GM12878 (cell line): ENCODE measurements at regions of chr1 and their contacts with region 1.

Region 1: DNA sequence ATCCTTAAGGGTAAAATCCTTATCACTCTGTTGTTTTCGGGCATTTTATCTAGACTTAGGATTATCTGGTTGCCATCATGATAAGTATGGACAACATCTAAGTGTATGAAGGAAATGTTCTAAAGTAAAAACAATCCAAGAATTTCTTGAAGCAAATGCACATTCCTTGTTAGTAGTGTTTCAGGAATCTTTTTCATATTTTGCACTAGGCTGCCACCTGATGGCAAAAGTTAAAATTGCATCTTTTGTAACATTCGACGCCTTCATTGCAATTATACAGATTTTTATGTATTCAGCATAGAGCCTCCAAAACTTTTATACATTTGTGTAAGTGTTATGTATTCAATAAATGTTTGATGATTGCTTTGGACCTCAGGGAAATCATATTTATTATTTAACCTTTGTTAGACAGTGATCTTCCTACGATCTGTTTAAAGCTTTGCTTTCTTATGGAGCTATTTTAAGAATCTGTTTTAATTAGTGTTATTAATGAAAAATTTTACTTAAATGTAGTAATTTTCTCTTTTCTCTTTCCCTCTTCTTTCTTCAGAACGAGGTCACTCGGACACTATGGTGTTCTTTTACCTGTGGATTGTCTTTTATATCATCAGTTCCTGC is 49.4 kb upstream of the KIAA1614 start:
- DNase-seq: no peak
- ATAC-seq: no peak
- H3K4me3 ChIP-seq: no peak overlapping the region
- H3K27ac ChIP-seq: no peak overlapping the region
- H3K4me1 ChIP-seq: no peaks in the 10 kb centered on the region
- H3K27me3 ChIP-seq: no peaks in the 10 kb centered on the region
- CTCF ChIP-seq: peak; percentile 51 to 69 (median 59); a peak in 5 of 6 replicates
- EP300 ChIP-seq: no peak
- POLR2A ChIP-seq: no peak
- RAD21 ChIP-seq: peak; percentile 88

Region 2: DNA sequence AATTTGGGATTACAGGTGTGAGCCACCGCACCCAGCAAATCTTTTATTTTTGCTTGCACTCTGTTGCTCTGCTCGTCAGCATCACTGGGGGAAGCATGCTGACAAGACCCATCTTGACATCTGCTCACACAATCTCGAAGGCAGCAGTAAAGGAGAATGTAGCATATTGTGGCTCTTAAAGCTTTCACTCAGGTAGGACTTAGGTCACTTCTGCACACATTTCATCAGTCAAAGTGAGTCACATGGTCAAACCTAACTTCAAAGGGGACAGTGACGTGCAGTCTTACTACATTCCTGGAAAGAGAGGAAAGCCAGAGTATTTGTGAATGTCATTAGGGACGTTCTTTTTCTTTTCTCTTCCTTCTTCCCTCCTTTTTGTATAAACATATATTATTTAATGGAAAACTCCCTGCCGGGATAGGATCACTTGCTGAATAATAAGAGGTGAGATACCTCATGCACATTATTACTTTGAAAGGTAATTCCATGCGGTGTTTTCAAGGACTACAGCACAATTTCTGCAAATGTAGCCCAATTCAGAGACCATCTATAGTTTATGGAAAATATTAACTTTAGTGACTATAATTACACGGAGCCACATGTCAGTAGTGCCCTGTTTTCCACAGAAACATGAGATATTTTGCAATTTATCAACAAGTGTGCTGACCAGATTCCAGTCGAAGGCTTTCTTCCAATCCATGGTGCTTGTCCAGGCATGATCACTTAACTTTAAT is 341.6 kb before region 1 on chr1:
- CTCF ChIA-PET with region 1: interaction called, 373 read pairs
- POLR2A ChIA-PET with region 1: interaction called, 3 read pairs
- RAD21 ChIA-PET with region 1: interaction called, 110 read pairs
- SMC1A ChIA-PET with region 1: interaction called, 139 read pairs
- in situ Hi-C with region 1: no loop called
- intact Hi-C with region 1: loop called (anchors 5 kb)
- DNase-seq: no peak
- ATAC-seq: no peak
- H3K4me3 ChIP-seq: no peak overlapping the region
- H3K27ac ChIP-seq: no peak overlapping the region
- H3K4me1 ChIP-seq: no peaks in the 10 kb centered on the region
- H3K27me3 ChIP-seq: no peaks in the 10 kb centered on the region
- CTCF ChIP-seq: no peak
- EP300 ChIP-seq: no peak
- POLR2A ChIP-seq: no peak
- RAD21 ChIP-seq: no peak

Region 3: DNA sequence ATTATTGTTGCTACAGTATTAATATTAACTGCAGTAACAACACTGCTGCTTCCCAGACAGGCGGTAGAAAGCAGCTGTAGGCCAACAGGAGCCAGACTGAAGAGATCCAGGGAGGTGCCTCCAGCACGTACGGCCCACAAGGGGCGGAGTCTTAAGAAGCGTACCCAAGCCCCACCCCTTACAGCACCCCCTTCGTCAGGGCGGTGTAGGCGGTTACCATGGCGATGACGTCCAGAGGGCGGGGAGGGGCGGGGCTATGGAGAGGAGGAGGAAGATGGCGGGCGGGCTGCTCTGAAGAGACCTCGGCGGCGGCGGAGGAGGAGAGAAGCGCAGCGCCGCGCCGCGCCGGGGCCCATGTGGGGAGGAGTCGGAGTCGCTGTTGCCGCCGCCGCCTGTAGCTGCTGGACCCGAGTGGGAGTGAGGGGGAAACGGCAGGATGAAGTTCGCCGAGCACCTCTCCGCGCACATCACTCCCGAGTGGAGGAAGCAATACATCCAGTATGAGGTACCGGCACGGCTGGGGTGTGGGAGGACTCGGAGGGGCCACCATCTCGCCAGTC is 231.4 kb before region 1 on chr1 and contains the start of gene XPR1:
- CTCF ChIA-PET with region 1: interaction called, 110 read pairs
- POLR2A ChIA-PET with region 1: interaction called, 4 read pairs
- RAD21 ChIA-PET with region 1: interaction called, 24 read pairs
- SMC1A ChIA-PET with region 1: interaction called, 54 read pairs
- in situ Hi-C with region 1: no loop called
- intact Hi-C with region 1: loop called (anchors 5 kb)
- DNase-seq: peak; percentile 95
- ATAC-seq: peak; percentile 96
- H3K4me3 ChIP-seq: peak within 1 kb of the TSS; percentile 89
- H3K27ac ChIP-seq: peak within 1 kb of the TSS; percentile 56
- H3K4me1 ChIP-seq: peaks cover 8% of the 10 kb centered on the region
- H3K27me3 ChIP-seq: no peaks in the 10 kb centered on the region
- CTCF ChIP-seq: peak; percentile 9 to 16 (median 10); a peak in 1 of 6 replicates
- EP300 ChIP-seq: no peak
- POLR2A ChIP-seq: peak; percentile 88
- RAD21 ChIP-seq: peak; percentile 26; the same call in 1 of the 2 replicates
- polyA plus RNA-seq, gene XPR1: 1.1 to 1.5 TPM

Region 4: DNA sequence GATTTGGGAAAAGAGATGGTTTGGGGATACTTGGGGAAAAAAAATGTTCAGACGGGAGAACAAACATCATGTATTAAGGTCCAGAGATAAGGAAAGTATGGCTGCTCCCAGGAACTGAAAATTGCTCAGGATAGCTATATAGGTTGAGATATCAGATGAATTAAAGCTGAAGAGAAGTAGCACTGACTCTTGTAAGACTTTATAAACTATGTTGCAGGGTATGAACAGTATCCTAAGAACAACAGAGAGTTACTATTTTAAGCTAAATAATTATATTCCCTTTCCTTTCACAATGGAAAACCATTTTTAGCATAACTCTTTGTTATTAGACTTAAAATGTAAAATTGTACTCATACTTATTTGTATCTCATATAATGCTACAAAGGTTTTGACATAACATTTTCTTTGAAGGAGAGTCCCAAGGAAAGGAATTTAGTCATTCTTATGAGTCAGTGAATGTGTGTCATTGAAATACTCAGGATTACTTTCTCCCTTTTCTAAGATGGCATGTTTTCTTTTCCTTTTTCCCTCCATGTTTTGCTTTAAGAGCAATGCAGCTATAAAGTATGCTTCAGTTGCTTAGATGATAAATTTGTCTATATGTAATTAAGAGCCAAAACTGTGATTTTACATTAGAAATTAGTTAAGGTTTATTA is 89.9 kb before region 1 on chr1:
- CTCF ChIA-PET with region 1: interaction called, 36 read pairs
- POLR2A ChIA-PET with region 1: no interaction called
- RAD21 ChIA-PET with region 1: interaction called, 14 read pairs
- SMC1A ChIA-PET with region 1: interaction called, 20 read pairs
- in situ Hi-C with region 1: no loop called
- intact Hi-C with region 1: loop called (anchors 5 kb)
- DNase-seq: no peak
- ATAC-seq: no peak
- H3K4me3 ChIP-seq: no peak overlapping the region
- H3K27ac ChIP-seq: no peak overlapping the region
- H3K4me1 ChIP-seq: no peaks in the 10 kb centered on the region; the same call in 1 of the 2 replicates
- H3K27me3 ChIP-seq: no peaks in the 10 kb centered on the region
- CTCF ChIP-seq: no peak
- EP300 ChIP-seq: no peak
- POLR2A ChIP-seq: no peak
- RAD21 ChIP-seq: no peak

Region 5: DNA sequence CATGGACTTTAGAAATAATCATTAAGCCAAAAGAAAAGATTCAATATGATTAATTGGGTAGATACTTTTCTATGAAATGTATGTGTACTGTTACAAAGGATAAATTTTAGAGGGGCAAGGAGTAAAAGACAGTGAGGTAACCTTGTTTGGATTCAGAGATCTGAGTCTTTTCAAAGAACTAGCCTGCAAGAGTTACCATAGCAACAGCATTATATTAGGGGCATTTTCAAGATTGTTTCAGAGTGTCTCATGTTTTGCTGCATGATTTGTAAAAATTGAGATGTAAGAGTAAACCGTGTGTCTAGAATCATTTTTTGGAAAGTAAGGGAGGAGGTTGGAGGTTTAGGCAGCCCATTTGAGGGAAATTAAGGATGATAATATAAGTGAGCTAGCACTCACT is 21.2 kb before region 1 on chr1:
- CTCF ChIA-PET with region 1: interaction called, 11 read pairs
- POLR2A ChIA-PET with region 1: no interaction called
- RAD21 ChIA-PET with region 1: interaction called, 10 read pairs
- SMC1A ChIA-PET with region 1: interaction called, 11 read pairs
- in situ Hi-C with region 1: no loop called
- intact Hi-C with region 1: no loop called
- DNase-seq: no peak
- ATAC-seq: no peak
- H3K4me3 ChIP-seq: no peak overlapping the region
- H3K27ac ChIP-seq: no peak overlapping the region
- H3K4me1 ChIP-seq: no peaks in the 10 kb centered on the region
- H3K27me3 ChIP-seq: no peaks in the 10 kb centered on the region
- CTCF ChIP-seq: no peak
- EP300 ChIP-seq: no peak
- POLR2A ChIP-seq: no peak
- RAD21 ChIP-seq: no peak

Region 6: DNA sequence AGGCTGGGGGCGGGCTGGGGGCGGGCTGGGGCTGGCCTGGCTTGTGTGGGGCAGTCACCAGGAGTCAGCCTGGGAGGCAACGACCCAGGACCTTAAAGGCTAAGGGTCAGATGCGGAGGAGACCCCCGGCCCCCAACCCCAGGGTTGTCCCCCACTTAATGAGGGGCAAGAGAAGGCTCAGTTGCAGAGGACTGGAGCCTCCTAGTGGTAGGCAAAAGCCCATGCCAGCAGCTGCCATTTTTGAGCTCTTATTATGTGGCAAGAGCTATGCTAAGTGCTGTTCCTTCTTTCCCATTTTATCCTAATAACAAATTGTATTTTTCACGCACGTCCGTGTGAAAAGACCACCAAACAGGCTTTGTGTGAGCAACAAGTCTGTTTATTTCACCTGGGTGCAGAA is 57.4 kb after region 1 on chr1:
- CTCF ChIA-PET with region 1: interaction called, 11 read pairs
- POLR2A ChIA-PET with region 1: no interaction called
- RAD21 ChIA-PET with region 1: interaction called, 11 read pairs
- SMC1A ChIA-PET with region 1: interaction called, 5 read pairs
- in situ Hi-C with region 1: no loop called
- intact Hi-C with region 1: no loop called
- DNase-seq: no peak
- ATAC-seq: peak; percentile 38; the same call in 1 of the 3 replicates
- H3K4me3 ChIP-seq: no peak overlapping the region
- H3K27ac ChIP-seq: no peak overlapping the region
- H3K4me1 ChIP-seq: peaks cover 9% of the 10 kb centered on the region
- H3K27me3 ChIP-seq: peaks cover 0 to 3% of the 10 kb centered on the region in 2 experiments; a peak in 1 of 4 replicates
- CTCF ChIP-seq: peak; percentile 41 to 57 (median 48)
- EP300 ChIP-seq: no peak
- POLR2A ChIP-seq: no peak
- RAD21 ChIP-seq: peak; percentile 33; the same call in 1 of the 2 replicates